Mammary epithelial cell (primary cell): ENCODE measurements at regions of chr13 and their contacts with region 1.

Region 1: GRCh38 chr13:48126944-48127830 is 32.3 kb upstream of the MED4 start:
- DNase-seq: peak; percentile 67
- H3K4me3 ChIP-seq: no peak overlapping the region
- H3K27ac ChIP-seq: peak overlapping the region; percentile 29
- H3K4me1 ChIP-seq: peaks cover 24% of the 10 kb centered on the region
- H3K27me3 ChIP-seq: no peaks in the 10 kb centered on the region
- CTCF ChIP-seq: peak; percentile 61 to 72

Region 2: DNA sequence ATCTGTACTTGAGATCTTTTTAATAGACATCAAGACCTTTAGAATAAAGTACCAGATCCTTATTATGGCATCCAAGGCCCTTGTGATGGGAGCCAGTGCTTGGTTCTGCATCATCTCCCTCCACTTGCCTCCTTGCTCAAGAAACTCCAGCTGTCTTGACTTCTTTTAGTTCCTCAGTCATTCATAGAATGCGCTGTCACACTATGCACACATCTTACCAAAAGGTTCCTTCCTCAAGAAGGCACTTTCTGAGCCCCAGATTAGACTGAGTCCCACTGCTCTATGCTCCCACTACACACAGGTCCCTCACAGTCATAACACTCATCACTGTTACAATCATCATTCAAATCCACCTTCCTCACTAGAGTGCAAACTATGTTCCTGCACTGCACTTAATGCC is 48.0 kb after region 1 on chr13:
- CTCF ChIA-PET with region 1: no interaction called
- dilution Hi-C with region 1: no loop called
- in situ Hi-C with region 1: no loop called
- intact Hi-C with region 1: no loop called
- DNase-seq: no peak
- H3K4me3 ChIP-seq: no peak overlapping the region
- H3K27ac ChIP-seq: no peak overlapping the region
- H3K4me1 ChIP-seq: no peaks in the 10 kb centered on the region
- H3K27me3 ChIP-seq: no peaks in the 10 kb centered on the region
- CTCF ChIP-seq: no peak

Region 3: DNA sequence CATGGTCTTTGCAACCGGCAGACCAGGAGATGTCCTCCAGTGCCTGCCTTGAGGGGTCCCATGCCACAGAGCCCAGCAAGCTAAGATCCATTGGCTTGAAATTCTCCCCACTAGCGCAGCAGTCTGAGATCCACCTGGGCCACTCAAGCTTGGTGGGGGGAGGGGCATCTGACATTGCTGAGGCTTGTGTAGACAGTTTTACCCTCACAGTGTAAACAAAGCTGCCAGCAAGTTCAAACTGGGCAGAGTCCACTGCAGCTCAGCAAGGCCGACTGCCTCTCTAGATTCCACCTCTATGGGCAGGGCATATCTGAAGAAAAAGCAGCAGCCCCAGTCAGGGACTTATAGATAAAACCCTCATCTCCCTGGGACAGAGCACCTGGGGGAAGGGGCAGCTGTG is 73.9 kb after region 1 on chr13:
- CTCF ChIA-PET with region 1: no interaction called
- dilution Hi-C with region 1: loop called (anchors 5 kb)
- in situ Hi-C with region 1: no loop called
- intact Hi-C with region 1: no loop called
- DNase-seq: no peak
- H3K4me3 ChIP-seq: no peak overlapping the region
- H3K27ac ChIP-seq: no peak overlapping the region
- H3K4me1 ChIP-seq: no peaks in the 10 kb centered on the region
- H3K27me3 ChIP-seq: no peaks in the 10 kb centered on the region
- CTCF ChIP-seq: no peak

Region 4: DNA sequence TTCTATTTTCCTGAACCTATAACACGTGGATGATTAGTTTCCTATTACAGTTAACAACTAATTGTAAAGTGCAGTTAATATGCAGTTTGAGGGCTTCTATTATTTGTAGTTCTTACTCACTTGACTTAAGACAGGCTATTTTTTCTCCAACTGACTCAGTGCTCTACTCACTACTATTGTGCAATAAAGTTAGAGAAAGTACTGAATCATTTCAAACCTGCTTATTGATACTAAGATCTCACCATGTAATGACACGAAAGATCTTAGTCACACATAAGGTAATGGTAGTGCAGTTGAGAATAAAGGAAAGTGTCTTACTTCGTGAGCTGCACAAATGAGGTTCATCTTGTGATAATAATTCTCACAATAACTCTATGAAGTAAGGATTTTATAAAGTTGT is 83.0 kb after region 1 on chr13:
- CTCF ChIA-PET with region 1: no interaction called
- dilution Hi-C with region 1: no loop called
- in situ Hi-C with region 1: no loop called
- intact Hi-C with region 1: loop called (anchors 1 kb)
- DNase-seq: peak; percentile 95
- H3K4me3 ChIP-seq: no peak overlapping the region
- H3K27ac ChIP-seq: peak overlapping the region; percentile 74
- H3K4me1 ChIP-seq: peaks cover 13% of the 10 kb centered on the region
- H3K27me3 ChIP-seq: no peaks in the 10 kb centered on the region
- CTCF ChIP-seq: no peak

Region 5: GRCh38 chr13:48303359-48304142 is 176.4 kb after region 1 on chr13 and contains the start of gene RB1:
- CTCF ChIA-PET with region 1: no interaction called
- dilution Hi-C with region 1: no loop called
- in situ Hi-C with region 1: no loop called
- intact Hi-C with region 1: loop called (anchors 1 kb)
- DNase-seq: peak; percentile 94
- H3K4me3 ChIP-seq: peak within 1 kb of the TSS; percentile 65 to 99 (median 86)
- H3K27ac ChIP-seq: peak within 1 kb of the TSS; percentile 97
- H3K4me1 ChIP-seq: peaks cover 18% of the 10 kb centered on the region
- H3K27me3 ChIP-seq: no peaks in the 10 kb centered on the region
- CTCF ChIP-seq: peak in 1 of 2 donors; percentile 1
- total RNA-seq, gene RB1: 34.7 to 48.6 TPM

Region 6: DNA sequence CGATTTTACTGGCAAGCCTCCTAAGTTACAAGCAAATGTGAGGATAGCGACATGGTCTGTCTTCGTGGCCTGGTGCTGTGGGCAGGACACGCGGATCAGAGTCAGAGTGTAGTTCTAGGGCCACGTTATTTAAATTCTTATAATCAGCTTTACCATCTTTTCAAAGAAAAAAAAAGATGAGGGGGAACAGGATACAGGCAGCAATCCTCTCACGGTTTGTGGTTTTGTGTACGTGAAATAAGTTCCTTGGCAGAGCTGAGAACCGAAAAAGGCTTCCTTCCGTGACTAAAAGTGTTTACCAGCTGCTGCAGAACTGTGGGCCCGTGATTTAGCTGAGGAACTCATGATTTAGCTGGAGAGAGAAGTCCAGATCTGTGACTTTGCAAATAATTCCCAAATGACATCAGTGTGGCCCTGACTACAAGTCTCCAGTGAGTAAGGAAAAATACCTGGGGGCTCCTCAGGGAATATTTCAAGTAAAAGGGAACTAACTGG is 378.5 kb after region 1 on chr13:
- CTCF ChIA-PET with region 1: no interaction called
- dilution Hi-C with region 1: no loop called
- in situ Hi-C with region 1: no loop called
- intact Hi-C with region 1: loop called (anchors 10 kb)
- DNase-seq: peak; percentile 51
- H3K4me3 ChIP-seq: no peak overlapping the region
- H3K27ac ChIP-seq: peak overlapping the region; percentile 53
- H3K4me1 ChIP-seq: peaks cover 54% of the 10 kb centered on the region
- H3K27me3 ChIP-seq: no peaks in the 10 kb centered on the region
- CTCF ChIP-seq: no peak

Region 7: DNA sequence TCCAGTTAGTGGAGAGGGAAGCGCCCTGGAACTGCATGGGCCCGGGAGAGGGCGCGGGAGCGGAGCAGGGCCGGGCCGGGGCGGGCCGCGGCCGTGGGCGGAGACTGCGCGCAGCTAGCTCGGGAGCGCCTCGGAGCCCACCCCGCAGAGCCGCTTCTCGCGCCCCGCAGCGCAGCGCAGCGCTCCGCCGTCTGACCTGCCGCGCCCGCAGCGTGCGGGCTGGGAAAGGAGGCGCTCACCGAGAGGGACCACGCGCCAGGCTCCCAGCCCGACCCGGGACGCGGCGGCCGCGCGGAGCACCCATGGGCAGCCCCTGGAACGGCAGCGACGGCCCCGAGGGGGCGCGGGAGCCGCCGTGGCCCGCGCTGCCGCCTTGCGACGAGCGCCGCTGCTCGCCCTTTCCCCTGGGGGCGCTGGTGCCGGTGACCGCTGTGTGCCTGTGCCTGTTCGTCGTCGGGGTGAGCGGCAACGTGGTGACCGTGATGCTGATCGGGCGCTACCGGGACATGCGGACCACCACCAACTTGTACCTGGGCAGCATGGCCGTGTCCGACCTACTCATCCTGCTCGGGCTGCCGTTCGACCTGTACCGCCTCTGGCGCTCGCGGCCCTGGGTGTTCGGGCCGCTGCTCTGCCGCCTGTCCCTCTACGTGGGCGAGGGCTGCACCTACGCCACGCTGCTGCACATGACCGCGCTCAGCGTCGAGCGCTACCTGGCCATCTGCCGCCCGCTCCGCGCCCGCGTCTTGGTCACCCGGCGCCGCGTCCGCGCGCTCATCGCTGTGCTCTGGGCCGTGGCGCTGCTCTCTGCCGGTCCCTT is 1093.1 kb after region 1 on chr13 and contains the start of gene MLNR:
- CTCF ChIA-PET with region 1: no interaction called
- dilution Hi-C with region 1: no loop called
- in situ Hi-C with region 1: no loop called
- intact Hi-C with region 1: no loop called
- DNase-seq: peak; percentile 14
- H3K4me3 ChIP-seq: peak within 1 kb of the TSS in 1 of 3 experiments; percentile 19
- H3K27ac ChIP-seq: no peak within 1 kb of the TSS
- H3K4me1 ChIP-seq: no peaks in the 10 kb centered on the region
- H3K27me3 ChIP-seq: peaks cover 41% of the 10 kb centered on the region
- CTCF ChIP-seq: no peak
- total RNA-seq, gene MLNR: not detected